ENCODE measurements at regions of chr12 and their contacts with region 1.

Region 1: GRCh38 chr12:42104087-42104486 is 40.6 kb downstream of the GXYLT1 start:
- DNase-seq: peak; percentile 8
- H3K4me3 ChIP-seq: no peak overlapping the region
- H3K27ac ChIP-seq: no peak overlapping the region
- H3K4me1 ChIP-seq: peaks cover 19% of the 10 kb centered on the region
- H3K27me3 ChIP-seq: no peaks in the 10 kb centered on the region
- CTCF ChIP-seq: peak; percentile 65

Region 2: DNA sequence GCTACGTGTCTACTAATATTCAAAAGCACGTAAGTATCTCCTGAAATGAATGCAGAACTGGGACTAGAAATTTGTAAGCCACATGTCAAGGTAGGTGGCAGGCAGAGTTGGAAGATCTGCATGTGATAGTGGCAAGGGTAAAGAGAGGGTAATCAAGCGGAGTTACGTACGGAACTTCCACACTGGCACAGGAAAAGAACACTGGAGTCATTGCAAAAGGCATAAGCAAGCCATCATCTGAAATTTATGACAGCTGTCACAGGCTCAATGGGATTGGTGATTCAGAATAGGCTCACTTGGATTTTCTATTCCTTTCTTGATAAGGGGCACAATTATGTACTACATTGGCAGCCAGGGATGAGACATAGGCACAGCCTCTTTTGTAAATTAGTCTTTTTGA is 670.6 kb before region 1 on chr12:
- CTCF ChIA-PET with region 1: no interaction called
- POLR2A ChIA-PET with region 1: no interaction called
- intact Hi-C with region 1: no loop called
- DNase-seq: no peak
- H3K4me3 ChIP-seq: no peak overlapping the region
- H3K27ac ChIP-seq: no peak overlapping the region
- H3K4me1 ChIP-seq: peaks cover 8% of the 10 kb centered on the region
- H3K27me3 ChIP-seq: no peaks in the 10 kb centered on the region
- CTCF ChIP-seq: no peak

Region 3: DNA sequence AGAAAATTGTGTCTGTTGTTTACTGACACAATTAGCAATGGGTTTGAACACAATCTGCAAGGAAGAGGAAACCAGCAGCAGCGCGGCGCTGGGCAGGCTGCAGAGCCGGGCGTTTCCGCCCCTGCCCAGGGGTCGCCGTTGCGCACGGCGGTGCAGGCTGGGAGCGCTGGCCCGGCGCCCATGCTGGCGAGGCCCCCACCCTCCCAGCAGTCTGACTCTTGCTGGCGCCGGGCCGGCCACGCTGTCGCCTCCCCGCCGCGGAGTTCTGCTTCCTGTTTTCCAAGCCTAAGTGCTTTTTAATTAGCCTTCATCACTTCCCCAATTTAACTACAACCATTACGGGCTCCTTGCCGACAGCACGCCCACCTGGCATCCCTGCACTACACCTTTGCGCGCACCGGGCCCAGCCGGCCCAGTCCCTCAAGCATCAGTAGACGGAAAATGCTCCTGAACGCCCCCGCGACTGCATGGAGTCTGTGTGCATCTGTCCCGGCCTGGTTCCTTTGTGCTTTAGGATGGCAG is 171.6 kb before region 1 on chr12:
- CTCF ChIA-PET with region 1: no interaction called
- POLR2A ChIA-PET with region 1: no interaction called
- intact Hi-C with region 1: loop called (anchors 10 kb)
- DNase-seq: peak; percentile 96
- H3K4me3 ChIP-seq: peak overlapping the region; percentile 35
- H3K27ac ChIP-seq: peak overlapping the region; percentile 74
- H3K4me1 ChIP-seq: peaks cover 42% of the 10 kb centered on the region
- H3K27me3 ChIP-seq: no peaks in the 10 kb centered on the region
- CTCF ChIP-seq: 0 out of 2 replicates have a peak, but pooled peaks have one; percentile 12

Region 4: DNA sequence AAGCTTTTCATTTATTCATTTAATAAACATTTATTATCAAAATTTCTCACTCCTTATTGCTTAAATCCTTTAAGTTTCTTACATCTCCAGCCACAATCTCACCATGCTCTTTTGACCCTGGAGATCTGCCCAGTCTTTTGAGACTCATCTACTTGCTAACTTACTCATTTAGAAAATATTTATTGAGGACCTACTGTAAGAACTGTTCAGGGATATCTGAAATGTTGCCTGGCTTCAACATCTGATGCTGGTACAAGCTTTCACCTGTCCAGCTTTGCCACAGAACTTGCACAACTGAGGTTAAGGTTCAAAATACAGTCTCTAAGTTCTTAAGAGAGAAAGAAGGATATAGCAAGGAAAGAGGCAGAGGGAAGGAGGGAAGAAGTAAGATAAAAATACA is 58.1 kb after region 1 on chr12:
- CTCF ChIA-PET with region 1: no interaction called
- POLR2A ChIA-PET with region 1: no interaction called
- intact Hi-C with region 1: loop called (anchors 10 kb)
- DNase-seq: no peak
- H3K4me3 ChIP-seq: no peak overlapping the region
- H3K27ac ChIP-seq: no peak overlapping the region
- H3K4me1 ChIP-seq: no peaks in the 10 kb centered on the region
- H3K27me3 ChIP-seq: no peaks in the 10 kb centered on the region
- CTCF ChIP-seq: no peak

Region 5: GRCh38 chr12:42410345-42410744 is 306.3 kb after region 1 on chr12:
- CTCF ChIA-PET with region 1: no interaction called
- POLR2A ChIA-PET with region 1: no interaction called
- intact Hi-C with region 1: no loop called
- DNase-seq: no peak
- H3K4me3 ChIP-seq: no peak overlapping the region
- H3K27ac ChIP-seq: no peak overlapping the region
- H3K4me1 ChIP-seq: peaks cover 5% of the 10 kb centered on the region
- H3K27me3 ChIP-seq: no peaks in the 10 kb centered on the region
- CTCF ChIP-seq: no peak

Measured in A673 (cell line).